HepG2 (cell line): ENCODE measurements at regions of chr2 and their contacts with region 1.

Region 1: DNA sequence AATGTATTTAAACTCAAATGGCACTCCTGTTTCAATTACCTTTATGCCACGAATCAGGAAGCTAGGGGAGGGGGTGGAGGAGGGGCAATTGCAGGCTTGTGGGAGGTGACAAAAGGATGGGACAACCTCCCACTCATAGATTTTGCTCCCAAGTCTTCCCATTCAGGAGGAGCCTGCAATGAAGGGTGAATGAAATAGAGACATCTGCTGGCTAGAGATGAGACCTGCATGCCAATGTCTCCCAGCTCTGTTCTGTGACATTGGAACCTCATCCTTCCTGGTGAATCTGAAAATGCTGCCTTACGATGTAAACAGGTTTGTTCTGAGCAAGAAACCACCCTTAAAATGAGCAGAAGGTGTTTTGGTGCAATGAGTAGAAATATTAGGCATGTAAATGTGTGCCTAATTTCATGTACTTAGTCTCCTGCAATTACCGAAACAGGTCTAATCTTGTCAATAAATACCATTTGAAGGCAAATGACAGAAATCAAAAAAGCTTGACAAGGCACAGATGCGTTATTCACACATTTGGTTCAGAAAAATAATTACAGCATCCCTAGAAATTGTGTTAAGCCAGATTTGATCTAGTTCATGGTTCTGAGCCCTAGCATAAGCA is 2.7 kb upstream of the PID1 start:
- DNase-seq: peak; percentile 65
- ATAC-seq: peak; percentile 95
- H3K4me3 ChIP-seq: no peak overlapping the region
- H3K27ac ChIP-seq: no peak overlapping the region
- H3K4me1 ChIP-seq: no peaks in the 10 kb centered on the region
- H3K27me3 ChIP-seq: peaks cover 0 to 26% of the 10 kb centered on the region in 2 experiments; a peak in 2 of 5 replicates
- CTCF ChIP-seq: peak; percentile 89
- EP300 ChIP-seq: no peak
- POLR2A ChIP-seq: no peak
- RAD21 ChIP-seq: peak; percentile 75

Region 2: GRCh38 chr2:227939271-227940027 is 1334.4 kb before region 1 on chr2:
- CTCF ChIA-PET with region 1: no interaction called
- POLR2A ChIA-PET with region 1: no interaction called
- in situ Hi-C with region 1: no loop called
- intact Hi-C with region 1: loop called (anchors 1 kb)
- DNase-seq: peak; percentile 60
- ATAC-seq: peak; percentile 95
- H3K4me3 ChIP-seq: no peak overlapping the region
- H3K27ac ChIP-seq: no peak overlapping the region
- H3K4me1 ChIP-seq: no peaks in the 10 kb centered on the region
- H3K27me3 ChIP-seq: no peaks in the 10 kb centered on the region
- CTCF ChIP-seq: peak; percentile 81
- EP300 ChIP-seq: no peak
- POLR2A ChIP-seq: no peak
- RAD21 ChIP-seq: peak; percentile 53; the same call in 1 of the 2 replicates

Region 3: DNA sequence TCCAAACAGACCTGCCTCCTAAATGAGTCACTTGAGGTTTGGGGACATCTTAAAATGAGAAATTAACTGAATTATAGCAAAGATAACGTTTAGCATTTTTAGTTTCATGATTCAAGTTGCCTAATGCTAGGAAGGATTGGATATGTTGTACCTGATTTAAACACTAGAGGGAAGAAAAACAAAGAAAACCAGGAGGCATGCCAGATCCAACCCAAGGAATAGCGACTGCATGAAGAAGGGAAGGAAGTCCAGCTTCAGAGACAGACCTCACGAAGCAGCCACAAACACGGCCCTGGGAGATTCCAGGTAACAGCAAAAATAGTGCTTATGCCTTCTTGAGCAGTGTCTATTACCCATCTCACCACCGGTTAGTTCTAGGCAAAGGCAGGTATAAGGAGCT is 592.4 kb before region 1 on chr2:
- CTCF ChIA-PET with region 1: no interaction called
- POLR2A ChIA-PET with region 1: no interaction called
- in situ Hi-C with region 1: no loop called
- intact Hi-C with region 1: loop called (anchors 1 kb)
- DNase-seq: no peak
- ATAC-seq: peak; percentile 62
- H3K4me3 ChIP-seq: no peak overlapping the region
- H3K27ac ChIP-seq: no peak overlapping the region
- H3K4me1 ChIP-seq: no peaks in the 10 kb centered on the region
- H3K27me3 ChIP-seq: no peaks in the 10 kb centered on the region
- CTCF ChIP-seq: peak; percentile 19; the same call in 1 of the 2 replicates
- EP300 ChIP-seq: no peak
- POLR2A ChIP-seq: no peak
- RAD21 ChIP-seq: no peak

Region 4: DNA sequence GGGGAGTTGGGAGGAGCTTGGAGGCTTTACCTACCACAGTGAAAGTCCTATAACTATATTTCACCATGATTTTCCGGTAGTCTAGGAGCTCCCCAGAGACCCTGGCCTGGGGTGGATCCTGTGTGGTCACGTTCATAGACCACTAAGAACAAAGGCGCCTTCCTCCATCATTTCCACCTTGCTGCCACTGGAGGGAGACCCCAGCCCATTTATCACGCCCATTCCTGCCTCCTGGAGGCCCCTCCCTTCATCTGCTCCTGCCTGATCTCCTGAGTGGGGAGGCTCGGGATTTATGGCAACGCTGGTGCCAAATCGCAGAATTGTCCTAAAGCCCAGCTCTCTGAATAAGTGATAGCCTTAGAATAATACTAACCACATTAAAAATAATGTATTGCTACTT is 584.8 kb before region 1 on chr2:
- CTCF ChIA-PET with region 1: no interaction called
- POLR2A ChIA-PET with region 1: no interaction called
- in situ Hi-C with region 1: no loop called
- intact Hi-C with region 1: loop called (anchors 2 kb)
- DNase-seq: no peak
- ATAC-seq: peak; percentile 78
- H3K4me3 ChIP-seq: no peak overlapping the region
- H3K27ac ChIP-seq: no peak overlapping the region
- H3K4me1 ChIP-seq: peaks cover 8% of the 10 kb centered on the region
- H3K27me3 ChIP-seq: no peaks in the 10 kb centered on the region
- CTCF ChIP-seq: peak; percentile 38
- EP300 ChIP-seq: no peak
- POLR2A ChIP-seq: no peak
- RAD21 ChIP-seq: no peak

Region 5: GRCh38 chr2:229133155-229133772 is 140.6 kb before region 1 on chr2:
- CTCF ChIA-PET with region 1: interaction called, 16 read pairs
- POLR2A ChIA-PET with region 1: no interaction called
- in situ Hi-C with region 1: no loop called
- intact Hi-C with region 1: loop called (anchors 1 kb)
- DNase-seq: peak; percentile 18
- ATAC-seq: peak; percentile 63
- H3K4me3 ChIP-seq: no peak overlapping the region
- H3K27ac ChIP-seq: no peak overlapping the region
- H3K4me1 ChIP-seq: no peaks in the 10 kb centered on the region
- H3K27me3 ChIP-seq: no peaks in the 10 kb centered on the region
- CTCF ChIP-seq: peak; percentile 59
- EP300 ChIP-seq: no peak
- POLR2A ChIP-seq: no peak
- RAD21 ChIP-seq: peak; percentile 71

Region 6: DNA sequence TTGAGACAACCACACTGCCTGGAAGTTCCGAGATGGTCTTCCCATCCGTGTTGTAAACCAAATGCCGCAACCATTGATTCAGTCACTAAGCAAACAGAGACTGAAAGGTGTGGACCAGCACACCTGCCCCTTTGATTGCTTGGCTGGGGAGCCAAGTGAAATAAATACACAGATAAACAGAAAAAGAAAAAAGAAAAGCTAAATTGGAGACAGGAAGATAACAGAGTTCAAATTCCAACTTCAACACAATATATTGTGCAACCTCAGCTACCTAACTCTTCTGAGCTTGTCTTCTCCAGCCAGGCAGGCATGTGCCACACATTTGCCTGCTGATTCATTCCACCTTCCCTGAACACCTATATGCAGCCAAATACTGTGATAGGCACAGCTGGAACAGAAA is 113.7 kb before region 1 on chr2:
- CTCF ChIA-PET with region 1: no interaction called
- POLR2A ChIA-PET with region 1: no interaction called
- in situ Hi-C with region 1: no loop called
- intact Hi-C with region 1: loop called (anchors 1 kb)
- DNase-seq: peak; percentile 74
- ATAC-seq: peak; percentile 90
- H3K4me3 ChIP-seq: no peak overlapping the region
- H3K27ac ChIP-seq: peak overlapping the region; percentile 35
- H3K4me1 ChIP-seq: peaks cover 39% of the 10 kb centered on the region
- H3K27me3 ChIP-seq: no peaks in the 10 kb centered on the region
- CTCF ChIP-seq: no peak
- EP300 ChIP-seq: peak; percentile 21 to 65; a peak in 2 of 4 replicates
- POLR2A ChIP-seq: no peak
- RAD21 ChIP-seq: no peak

Region 7: DNA sequence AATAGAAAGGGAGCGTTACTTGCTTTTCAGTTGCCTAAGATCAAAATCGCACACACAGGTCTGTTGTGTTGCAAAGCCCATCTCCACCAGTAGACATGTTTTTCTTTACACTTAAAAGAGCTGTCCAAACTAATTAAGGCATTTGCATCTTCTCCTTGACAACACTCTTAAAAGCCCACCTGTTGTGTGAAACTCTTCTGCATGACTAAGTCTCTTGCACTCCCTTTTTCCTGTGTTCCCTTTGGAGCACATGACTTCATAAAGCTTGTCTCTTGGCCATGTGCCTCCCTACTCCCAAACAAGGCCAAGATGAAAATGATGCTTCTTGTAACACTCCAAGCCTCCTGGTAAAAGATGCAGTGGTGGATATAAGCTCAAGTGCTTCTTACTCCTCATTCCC is 28.9 kb before region 1 on chr2:
- CTCF ChIA-PET with region 1: no interaction called
- POLR2A ChIA-PET with region 1: no interaction called
- in situ Hi-C with region 1: no loop called
- intact Hi-C with region 1: no loop called
- DNase-seq: no peak
- ATAC-seq: no peak
- H3K4me3 ChIP-seq: no peak overlapping the region
- H3K27ac ChIP-seq: no peak overlapping the region
- H3K4me1 ChIP-seq: no peaks in the 10 kb centered on the region
- H3K27me3 ChIP-seq: no peaks in the 10 kb centered on the region
- CTCF ChIP-seq: no peak
- EP300 ChIP-seq: no peak
- POLR2A ChIP-seq: no peak
- RAD21 ChIP-seq: no peak